ENCODE measurements at regions of chr12 and their contacts with region 1.

Region 1: DNA sequence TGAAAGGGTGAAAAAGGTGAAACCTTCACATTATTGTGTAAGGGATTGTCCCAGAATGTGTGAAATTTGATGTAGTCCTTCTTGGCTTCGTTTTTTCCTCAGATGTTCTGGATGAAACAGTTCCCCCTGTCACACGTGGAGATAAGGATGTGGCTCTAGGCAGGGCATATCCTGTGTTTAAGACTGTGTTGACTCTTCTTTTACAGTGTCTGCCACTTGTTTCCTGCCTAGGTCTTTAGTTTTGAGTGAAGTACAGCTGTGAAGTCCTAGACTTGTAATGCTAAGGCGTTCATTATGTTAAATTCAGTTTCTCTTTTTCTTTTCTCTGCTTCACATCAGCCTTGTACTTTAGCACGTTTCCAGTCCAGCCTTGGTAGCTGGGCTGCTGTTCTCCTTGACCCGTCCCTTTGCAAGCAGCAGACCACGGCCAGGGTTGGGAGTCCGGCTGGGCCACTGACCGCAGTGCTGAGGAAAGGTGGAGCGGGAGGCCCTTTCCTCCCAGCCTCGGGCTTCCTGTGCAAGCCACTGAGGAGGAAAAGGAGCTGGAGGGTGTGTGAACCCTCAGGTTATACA is 59.1 kb downstream of the RASSF3 start:
- DNase-seq: peak; percentile 89

Region 2: DNA sequence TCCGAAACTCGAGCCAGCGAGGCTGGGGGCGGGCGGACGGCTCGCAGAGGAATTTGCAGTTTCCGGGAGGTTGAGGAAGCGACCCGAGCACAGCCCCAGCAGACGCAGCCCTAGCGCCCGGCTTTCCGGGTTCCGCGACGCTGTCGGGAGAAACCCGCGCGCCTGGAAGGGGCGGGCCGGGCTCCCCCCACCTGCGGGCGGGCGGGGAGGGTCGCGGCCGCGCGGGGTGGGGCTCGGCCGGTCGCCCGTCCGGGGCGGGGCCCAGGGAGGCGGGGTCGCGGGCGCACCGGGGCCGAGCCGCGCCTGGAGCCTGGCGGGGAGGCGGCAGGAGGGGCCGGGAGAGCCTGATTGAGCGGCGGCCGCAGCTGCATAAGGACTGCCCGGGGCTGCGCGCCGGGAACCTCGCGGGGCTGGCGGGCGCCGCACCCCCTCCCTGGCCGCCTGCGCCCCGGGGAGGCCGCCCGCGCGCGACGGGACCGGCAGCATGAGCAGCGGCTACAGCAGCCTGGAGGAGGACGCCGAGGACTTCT is 59.1 kb before region 1 on chr12 and contains the start of gene RASSF3:
- intact Hi-C with region 1: loop called (anchors 5 kb)
- DNase-seq: peak; percentile 93
- total RNA-seq, gene RASSF3: 98.8 TPM

Region 3: GRCh38 chr12:64650762-64651161 is 18.6 kb before region 1 on chr12:
- intact Hi-C with region 1: no loop called
- DNase-seq: no peak